ENCODE measurements at regions of chr14 and their contacts with region 1.

Region 1: GRCh38 chr14:32731249-32731648 is 207.4 kb upstream of the NPAS3 start:
- DNase-seq: no peak
- H3K4me3 ChIP-seq: no peak overlapping the region
- H3K27ac ChIP-seq: no peak overlapping the region
- H3K4me1 ChIP-seq: no peaks in the 10 kb centered on the region
- H3K27me3 ChIP-seq: no peaks in the 10 kb centered on the region
- CTCF ChIP-seq: no peak
- POLR2A ChIP-seq: no peak

Region 2: DNA sequence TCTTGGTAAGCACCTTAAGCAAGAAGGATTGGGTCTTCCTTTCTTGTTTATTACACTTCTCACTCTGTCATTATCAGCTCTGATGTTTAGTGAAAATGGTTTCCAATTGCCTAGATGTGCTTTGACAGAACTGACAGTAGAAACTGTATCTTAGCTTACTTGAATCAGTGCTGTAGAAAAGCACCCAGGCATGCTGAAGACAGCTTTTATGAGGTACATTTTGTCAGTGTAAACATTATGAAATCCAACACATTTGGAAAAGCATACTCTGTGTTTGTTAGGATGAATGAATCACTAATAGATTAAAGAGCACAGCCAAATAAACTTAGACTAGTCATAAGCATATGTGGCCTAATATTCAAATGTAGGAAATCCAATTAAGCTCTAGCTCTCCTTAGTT is 82.8 kb before region 1 on chr14:
- intact Hi-C with region 1: no loop called
- DNase-seq: no peak
- H3K4me3 ChIP-seq: no peak overlapping the region
- H3K27ac ChIP-seq: no peak overlapping the region
- H3K4me1 ChIP-seq: no peaks in the 10 kb centered on the region
- H3K27me3 ChIP-seq: no peaks in the 10 kb centered on the region
- CTCF ChIP-seq: no peak
- POLR2A ChIP-seq: no peak

Region 3: DNA sequence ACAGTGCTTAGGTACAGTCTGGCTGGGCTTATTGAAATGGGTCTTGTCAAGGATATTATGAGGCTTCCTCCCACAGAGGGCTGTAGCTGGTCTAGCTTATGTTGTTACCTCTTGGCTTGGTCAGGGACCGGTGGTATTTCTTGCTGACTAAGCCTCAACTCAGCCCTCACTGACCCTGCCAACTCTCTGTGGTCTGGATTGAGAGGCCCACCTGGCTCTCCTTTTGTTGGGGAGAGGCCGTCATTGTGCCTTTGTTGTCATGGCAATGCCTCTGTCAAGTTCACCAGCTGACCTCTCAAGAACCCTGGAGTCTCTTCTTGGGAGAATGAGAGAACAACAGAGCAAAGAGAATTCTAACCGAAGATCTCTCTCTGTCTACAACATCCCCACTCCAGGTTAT is 38.1 kb before region 1 on chr14:
- intact Hi-C with region 1: no loop called
- DNase-seq: no peak
- H3K4me3 ChIP-seq: no peak overlapping the region
- H3K27ac ChIP-seq: no peak overlapping the region
- H3K4me1 ChIP-seq: no peaks in the 10 kb centered on the region
- H3K27me3 ChIP-seq: no peaks in the 10 kb centered on the region
- CTCF ChIP-seq: no peak
- POLR2A ChIP-seq: no peak

Region 4: GRCh38 chr14:32754209-32754608 is 23.0 kb after region 1 on chr14:
- intact Hi-C with region 1: loop called (anchors 2 kb)
- DNase-seq: no peak
- H3K4me3 ChIP-seq: no peak overlapping the region
- H3K27ac ChIP-seq: no peak overlapping the region
- H3K4me1 ChIP-seq: no peaks in the 10 kb centered on the region
- H3K27me3 ChIP-seq: no peaks in the 10 kb centered on the region
- CTCF ChIP-seq: no peak
- POLR2A ChIP-seq: no peak